B cell (primary cell): ENCODE measurements at regions of chr19 and their contacts with region 1.

Region 1: GRCh38 chr19:42386974-42387707 is 3.0 kb downstream of the CNFN start:
- DNase-seq: peak; percentile 90
- ATAC-seq: peak; percentile 93
- H3K4me3 ChIP-seq: peak overlapping the region in 4 of 5 experiments; percentile 53 to 68 (median 64)
- H3K4me3 Mint-ChIP-seq: peak overlapping the region; percentile 86
- H3K27ac ChIP-seq: peak overlapping the region; percentile 23 to 33
- H3K27ac Mint-ChIP-seq: peak overlapping the region; percentile 80
- H3K4me1 ChIP-seq: peaks cover 5 to 12% of the 10 kb centered on the region in 2 donors
- H3K4me1 Mint-ChIP-seq: peaks cover 7% of the 10 kb centered on the region
- H3K27me3 ChIP-seq: peaks cover 0 to 18% (median 6%) of the 10 kb centered on the region in 4 experiments
- H3K27me3 Mint-ChIP-seq: peaks cover 26% of the 10 kb centered on the region
- CTCF ChIP-seq: peak; percentile 74

Region 2: GRCh38 chr19:42363614-42364346 is 23.4 kb before region 1 on chr19:
- CTCF ChIA-PET with region 1: interaction called, 9 read pairs
- POLR2A ChIA-PET with region 1: interaction called, 5 read pairs
- intact Hi-C with region 1: loop called (anchors 1 kb)
- DNase-seq: peak; percentile 82
- ATAC-seq: peak; percentile 54
- H3K4me3 ChIP-seq: peak overlapping the region in 1 of 5 experiments; percentile 11
- H3K4me3 Mint-ChIP-seq: peak overlapping the region; percentile 17
- H3K27ac ChIP-seq: peak overlapping the region; percentile 81 to 87
- H3K27ac Mint-ChIP-seq: peak overlapping the region; percentile 86
- H3K4me1 ChIP-seq: peaks cover 38 to 47% of the 10 kb centered on the region in 2 donors
- H3K4me1 Mint-ChIP-seq: peaks cover 47% of the 10 kb centered on the region
- H3K27me3 ChIP-seq: no peaks in the 10 kb centered on the region
- H3K27me3 Mint-ChIP-seq: no peaks in the 10 kb centered on the region
- CTCF ChIP-seq: no peak

Region 3: GRCh38 chr19:42433503-42434260 is 46.5 kb after region 1 on chr19:
- CTCF ChIA-PET with region 1: interaction called, 10 read pairs
- POLR2A ChIA-PET with region 1: no interaction called
- intact Hi-C with region 1: loop called (anchors 1 kb)
- DNase-seq: peak; percentile 65
- ATAC-seq: peak; percentile 75
- H3K4me3 ChIP-seq: no peak overlapping the region
- H3K4me3 Mint-ChIP-seq: no peak overlapping the region
- H3K27ac ChIP-seq: no peak overlapping the region
- H3K27ac Mint-ChIP-seq: no peak overlapping the region
- H3K4me1 ChIP-seq: peaks cover 0 to 4% of the 10 kb centered on the region in 2 donors
- H3K4me1 Mint-ChIP-seq: peaks cover 6% of the 10 kb centered on the region
- H3K27me3 ChIP-seq: peaks cover 0 to under 1% (median 0%) of the 10 kb centered on the region in 4 experiments
- H3K27me3 Mint-ChIP-seq: no peaks in the 10 kb centered on the region
- CTCF ChIP-seq: peak; percentile 81

Region 4: DNA sequence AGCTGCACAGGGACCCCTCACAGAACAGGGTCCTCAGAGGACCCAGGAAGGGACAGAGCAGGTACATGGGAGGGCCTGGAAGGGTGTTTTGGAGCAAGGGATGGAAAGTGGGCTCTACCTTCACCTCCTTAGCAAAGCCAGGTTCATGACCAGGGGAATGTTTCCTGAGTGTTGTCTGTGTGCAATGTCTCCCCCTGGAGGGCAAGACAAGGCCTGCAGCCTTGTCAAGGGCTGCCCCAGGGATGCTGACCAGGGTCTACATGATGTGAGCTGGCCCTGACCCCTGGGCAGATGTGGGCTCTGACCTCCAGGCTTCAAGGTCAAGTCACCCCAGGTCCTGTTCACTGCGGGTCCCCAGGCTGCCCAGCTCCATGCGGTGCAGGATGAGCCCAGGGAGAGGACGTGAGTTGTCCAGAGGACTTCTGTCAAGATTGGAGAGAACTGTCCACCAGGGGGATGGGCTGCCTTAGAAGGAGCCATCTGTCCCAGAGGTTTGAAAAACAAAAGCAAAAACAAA is 142.2 kb after region 1 on chr19:
- CTCF ChIA-PET with region 1: no interaction called
- POLR2A ChIA-PET with region 1: no interaction called
- intact Hi-C with region 1: no loop called
- DNase-seq: peak; percentile 85
- ATAC-seq: peak; percentile 80
- H3K4me3 ChIP-seq: peak overlapping the region in 3 of 5 experiments; percentile 48 to 74 (median 56)
- H3K4me3 Mint-ChIP-seq: peak overlapping the region; percentile 87
- H3K27ac ChIP-seq: peak overlapping the region; percentile 45 to 67
- H3K27ac Mint-ChIP-seq: peak overlapping the region; percentile 88
- H3K4me1 ChIP-seq: peaks cover 22 to 25% of the 10 kb centered on the region in 2 donors
- H3K4me1 Mint-ChIP-seq: peaks cover 35% of the 10 kb centered on the region
- H3K27me3 ChIP-seq: no peaks in the 10 kb centered on the region
- H3K27me3 Mint-ChIP-seq: no peaks in the 10 kb centered on the region
- CTCF ChIP-seq: peak; percentile 97